SK-N-SH (cell line): ENCODE measurements at regions of chr15 and their contacts with region 1.

Region 1: DNA sequence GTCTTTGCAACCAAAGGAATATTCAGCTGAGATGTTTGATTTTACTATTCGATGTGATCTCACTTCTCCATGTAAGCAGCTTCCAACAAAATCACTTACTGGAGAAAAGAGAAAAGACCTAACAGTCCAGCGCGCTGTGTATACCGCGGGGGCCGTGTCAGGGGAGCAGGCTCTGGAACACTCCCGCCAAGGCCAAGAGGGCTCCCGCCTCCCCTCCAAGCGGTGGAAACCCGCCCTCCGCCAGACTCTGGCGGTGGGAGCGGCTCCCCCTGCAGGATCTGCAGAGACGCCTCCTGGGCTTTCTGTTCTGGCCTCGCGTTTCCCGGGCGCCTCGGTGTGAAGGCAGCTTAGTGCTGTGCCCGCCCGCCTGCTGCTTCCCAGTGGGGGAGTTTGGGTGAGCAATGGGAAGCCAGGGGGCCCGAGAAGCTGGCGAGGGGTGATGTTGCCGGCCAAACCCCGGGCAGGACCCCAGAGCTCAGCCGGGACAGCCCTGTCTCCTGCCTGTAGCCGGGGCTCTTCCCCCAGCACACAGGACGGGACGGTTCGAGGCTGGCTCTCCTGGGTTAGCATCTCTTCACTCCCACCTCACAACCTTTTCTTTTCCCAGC is 36.3 kb downstream of the CHST14 start:
- DNase-seq: peak; percentile 95
- H3K4me3 ChIP-seq: peak overlapping the region in 1 of 2 experiments; percentile 2; a peak in 1 of 4 replicates
- H3K27ac ChIP-seq: no peak overlapping the region
- H3K4me1 ChIP-seq: no peaks in the 10 kb centered on the region; a peak in 1 of 4 replicates
- H3K27me3 ChIP-seq: no peaks in the 10 kb centered on the region
- CTCF ChIP-seq: peak; percentile 69
- EP300 ChIP-seq: no peak
- RAD21 ChIP-seq: peak; percentile 64

Region 2: DNA sequence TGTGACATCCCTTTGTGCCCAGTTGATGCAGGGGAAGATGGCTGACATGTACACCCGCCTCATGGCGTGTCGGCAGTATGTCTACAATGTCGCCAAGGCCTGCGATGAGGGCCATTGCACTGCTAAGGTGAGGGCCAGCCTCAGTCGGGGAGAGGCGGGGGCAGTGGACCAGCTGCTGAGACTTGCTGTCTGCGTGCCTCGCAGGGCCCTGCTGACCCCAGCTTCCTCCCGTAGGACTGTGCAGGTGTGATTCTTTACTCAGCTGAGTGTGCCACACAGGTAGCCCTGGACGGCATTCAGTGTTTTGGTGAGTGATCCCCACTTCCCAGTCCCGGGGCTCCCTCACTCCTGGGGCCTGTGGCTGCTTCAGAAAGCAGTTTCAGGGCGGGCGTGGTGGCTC is 91.0 kb before region 1 on chr15:
- CTCF ChIA-PET with region 1: no interaction called
- POLR2A ChIA-PET with region 1: no interaction called
- DNase-seq: no peak
- H3K4me3 ChIP-seq: no peak overlapping the region
- H3K27ac ChIP-seq: no peak overlapping the region
- H3K4me1 ChIP-seq: peaks cover 0 to 11% of the 10 kb centered on the region in 2 experiments; a peak in 1 of 4 replicates
- H3K27me3 ChIP-seq: no peaks in the 10 kb centered on the region
- CTCF ChIP-seq: no peak
- EP300 ChIP-seq: no peak
- RAD21 ChIP-seq: no peak

Region 3: GRCh38 chr15:40430271-40430805 is 76.7 kb before region 1 on chr15:
- CTCF ChIA-PET with region 1: no interaction called
- POLR2A ChIA-PET with region 1: no interaction called
- DNase-seq: no peak
- H3K4me3 ChIP-seq: no peak overlapping the region
- H3K27ac ChIP-seq: no peak overlapping the region
- H3K4me1 ChIP-seq: no peaks in the 10 kb centered on the region; a peak in 1 of 4 replicates
- H3K27me3 ChIP-seq: no peaks in the 10 kb centered on the region; the same call in 1 of the 2 replicates
- CTCF ChIP-seq: no peak
- EP300 ChIP-seq: no peak
- RAD21 ChIP-seq: no peak

Region 4: DNA sequence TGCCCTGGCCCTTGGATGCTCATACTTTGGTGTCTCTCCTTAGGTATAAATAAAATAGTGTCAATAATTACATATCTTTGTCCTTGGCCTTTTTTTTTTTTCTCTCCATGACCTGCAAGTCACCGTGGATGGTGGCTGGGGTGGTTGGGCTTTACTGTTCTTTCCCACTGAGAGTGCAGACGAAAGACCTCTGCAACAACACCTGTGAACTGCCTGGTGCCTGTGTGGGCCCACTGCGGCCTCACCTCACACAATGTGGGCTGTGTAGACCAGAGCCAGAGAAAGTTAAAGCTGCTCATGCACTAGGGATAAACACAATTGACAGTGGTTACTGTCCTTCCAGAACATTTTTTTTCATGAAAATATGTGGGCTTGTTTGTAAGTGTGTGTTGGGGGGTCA is 18.8 kb after region 1 on chr15:
- CTCF ChIA-PET with region 1: interaction called, 23 read pairs
- POLR2A ChIA-PET with region 1: no interaction called
- DNase-seq: no peak
- H3K4me3 ChIP-seq: no peak overlapping the region
- H3K27ac ChIP-seq: no peak overlapping the region
- H3K4me1 ChIP-seq: no peaks in the 10 kb centered on the region
- H3K27me3 ChIP-seq: no peaks in the 10 kb centered on the region
- CTCF ChIP-seq: no peak
- EP300 ChIP-seq: no peak
- RAD21 ChIP-seq: no peak